ENCODE measurements at regions of chr11 and their contacts with region 1.

Region 1: GRCh38 chr11:3091791-3092602 is 34.8 kb upstream of the CARS1 start:
- DNase-seq: peak in 9 of 10 donors; percentile 43 to 84 (median 65)
- H3K4me3 ChIP-seq: no peak overlapping the region
- H3K27ac ChIP-seq: peak overlapping the region in 1 of 59 donors; percentile 30
- H3K27me3 ChIP-seq: no peaks in the 10 kb centered on the region
- CTCF ChIP-seq: peak; percentile 93 to 100 (median 99)

Region 2: GRCh38 chr11:2807025-2807681 is 284.8 kb before region 1 on chr11:
- intact Hi-C with region 1: no loop called
- DNase-seq: peak in 9 of 10 donors; percentile 41 to 85 (median 58)
- H3K4me3 ChIP-seq: peak overlapping the region in 25 of 59 donors; percentile 2 to 45 (median 19)
- H3K27ac ChIP-seq: peak overlapping the region in 18 of 59 donors; percentile 2 to 64 (median 37)
- H3K27me3 ChIP-seq: peaks cover 0 to 16% (median 0%) of the 10 kb centered on the region in 45 donors
- CTCF ChIP-seq: peak in 2 of 56 donors; percentile 8 to 13

Region 3: DNA sequence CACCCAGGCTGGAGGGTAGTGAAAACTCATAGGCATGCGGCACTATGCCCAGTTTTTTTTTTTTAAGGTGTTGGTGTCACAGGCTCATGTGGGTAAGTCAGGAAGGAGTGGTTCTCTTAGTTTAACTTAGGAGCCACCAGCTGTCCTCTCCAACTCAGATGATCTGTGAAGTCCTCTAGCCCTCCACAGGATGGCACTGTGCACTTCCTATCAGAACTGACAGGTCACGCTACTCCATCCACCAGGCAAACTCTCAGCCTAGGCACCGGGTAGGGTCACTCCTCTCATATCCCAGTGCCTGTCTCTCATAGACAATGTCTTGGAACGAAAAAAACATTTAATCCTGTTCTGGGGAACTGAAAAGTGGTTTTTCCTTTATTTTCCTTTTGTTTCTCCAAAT is 116.4 kb before region 1 on chr11:
- intact Hi-C with region 1: loop called in 1 of 2 experiments (anchors 5 kb)
- DNase-seq: peak in 6 of 10 donors; percentile 14 to 59 (median 54)
- H3K4me3 ChIP-seq: no peak overlapping the region
- H3K27ac ChIP-seq: peak overlapping the region in 15 of 59 donors; percentile 0 to 57 (median 27)
- H3K27me3 ChIP-seq: no peaks in the 10 kb centered on the region
- CTCF ChIP-seq: peak in 55 of 56 donors; percentile 13 to 84 (median 66)

Region 4: GRCh38 chr11:3049430-3050243 is 42.4 kb before region 1 on chr11:
- intact Hi-C with region 1: loop called in 1 of 2 experiments (anchors 5 kb)
- DNase-seq: peak; percentile 49 to 97 (median 94)
- H3K4me3 ChIP-seq: peak overlapping the region in 51 of 59 donors; percentile 2 to 59 (median 33)
- H3K27ac ChIP-seq: peak overlapping the region; percentile 56 to 99 (median 94)
- H3K27me3 ChIP-seq: no peaks in the 10 kb centered on the region
- CTCF ChIP-seq: peak in 54 of 56 donors; percentile 21 to 75 (median 55)

Region 5: GRCh38 chr11:3153291-3153861 is 61.4 kb after region 1 on chr11:
- intact Hi-C with region 1: loop called in 1 of 2 experiments (anchors 5 kb)
- DNase-seq: peak in 3 of 10 donors; percentile 58 to 74 (median 63)
- H3K4me3 ChIP-seq: peak overlapping the region in 2 of 59 donors; percentile 13 to 27
- H3K27ac ChIP-seq: peak overlapping the region in 27 of 59 donors; percentile 1 to 82 (median 41)
- H3K27me3 ChIP-seq: no peaks in the 10 kb centered on the region
- CTCF ChIP-seq: no peak

Region 6: DNA sequence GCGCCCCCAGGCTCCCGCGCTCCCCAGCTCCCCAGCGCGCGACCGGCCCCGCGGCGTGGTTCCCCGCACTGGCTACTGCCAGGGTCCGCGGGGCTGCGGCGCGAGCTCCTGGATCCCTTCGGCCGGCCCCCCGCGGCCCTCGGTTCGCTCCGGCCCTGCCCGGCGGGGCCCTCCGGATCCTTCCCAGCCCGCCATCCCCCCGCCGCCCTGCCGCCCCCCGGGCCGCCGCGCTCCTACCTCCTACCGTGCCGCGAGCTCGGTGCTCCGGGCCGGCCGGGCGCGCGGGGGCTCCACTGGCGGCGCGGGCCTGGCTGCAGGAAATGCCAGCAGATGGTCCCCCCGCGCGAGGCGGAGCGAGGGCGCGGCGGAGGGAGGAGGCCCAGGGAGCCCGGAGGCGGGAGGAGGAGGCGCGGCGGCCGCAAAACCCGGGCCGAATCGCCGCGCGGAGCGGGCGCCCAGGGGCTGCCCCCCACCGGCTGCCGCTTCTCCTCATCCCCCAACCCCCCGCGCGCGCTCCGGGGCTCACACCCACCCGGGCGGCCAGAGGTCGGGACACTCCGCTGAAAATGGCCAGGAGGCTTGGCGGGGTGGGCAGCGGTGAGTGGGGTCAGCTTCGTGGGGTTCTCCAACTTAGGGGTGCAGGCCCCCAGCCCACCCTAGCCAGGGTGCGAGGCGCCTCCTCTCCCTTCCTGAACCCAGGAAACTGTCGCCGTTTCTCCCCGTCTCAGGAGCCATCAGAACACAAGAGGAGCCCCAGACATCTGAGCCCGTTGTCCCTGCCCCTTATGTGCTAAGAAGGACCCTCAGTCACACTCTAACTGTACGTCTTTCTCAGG is 73.2 kb after region 1 on chr11 and contains the start of gene OSBPL5:
- intact Hi-C with region 1: no loop called
- DNase-seq: peak; percentile 53 to 85 (median 74)
- H3K4me3 ChIP-seq: peak within 1 kb of the TSS; percentile 60 to 92 (median 81)
- H3K27ac ChIP-seq: peak within 1 kb of the TSS; percentile 34 to 95 (median 88)
- H3K27me3 ChIP-seq: no peaks in the 10 kb centered on the region
- CTCF ChIP-seq: peak in 13 of 56 donors; percentile 10 to 47 (median 18)
- total RNA-seq, gene OSBPL5: 26.3 to 70.7 (median 43.8) TPM

Measured in dorsolateral prefrontal cortex (tissue), 120 donors.